ENCODE measurements at regions of chr20 and their contacts with region 1.

Region 1: DNA sequence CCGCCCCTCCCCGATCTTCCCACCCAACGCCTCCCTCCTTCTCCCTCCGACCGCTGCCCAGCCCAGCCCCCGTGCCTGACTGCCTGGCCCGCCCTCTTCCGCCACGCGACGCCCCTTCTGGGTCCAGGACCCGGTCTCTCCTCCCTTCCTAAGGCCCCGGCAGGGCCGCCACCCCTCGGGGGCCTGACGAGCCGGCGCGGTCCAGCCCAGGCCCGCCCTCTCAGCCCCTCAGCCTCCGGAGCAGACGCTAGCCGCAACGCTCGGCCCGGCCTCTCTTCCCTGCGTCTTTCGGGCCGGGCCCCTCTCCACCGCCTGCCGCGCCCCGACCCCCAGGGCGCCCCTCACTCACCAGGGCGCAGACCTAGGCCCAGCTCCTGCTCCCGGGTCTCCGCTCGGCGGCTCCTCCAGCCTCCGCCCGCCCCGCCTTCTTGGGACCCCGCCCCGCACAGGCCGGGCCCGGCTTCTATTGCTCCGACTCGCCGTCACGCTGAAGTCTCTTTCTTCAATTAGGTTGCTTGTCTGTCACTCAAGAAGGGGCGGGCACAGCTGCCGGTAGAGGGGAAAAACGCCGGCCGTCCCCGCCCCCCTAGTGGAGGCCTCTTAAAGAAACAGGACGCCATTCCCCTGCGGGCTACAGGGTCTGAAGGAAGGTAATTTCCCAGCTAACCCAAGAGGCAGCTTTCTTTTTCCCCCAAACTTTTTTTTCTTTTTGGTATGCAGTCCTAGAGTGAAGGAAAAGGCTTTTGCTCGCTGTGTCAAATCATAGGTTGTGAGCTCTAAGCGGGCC is at the start of gene ELMO2:
- DNase-seq: peak; percentile 95
- H3K4me3 ChIP-seq: peak within 1 kb of the TSS; percentile 85 to 96
- H3K27ac ChIP-seq: peak within 1 kb of the TSS; percentile 88 to 93
- H3K4me1 ChIP-seq: peaks cover 4 to 17% of the 10 kb centered on the region in 2 experiments; a peak in 2 of 4 replicates
- H3K27me3 ChIP-seq: no peaks in the 10 kb centered on the region
- CTCF ChIP-seq: no peak
- EP300 ChIP-seq: no peak
- RAD21 ChIP-seq: no peak
- polyA plus RNA-seq, gene ELMO2: 32.1 and 38.5 TPM in 2 replicates

Region 2: GRCh38 chr20:45946149-45946970 is 460.0 kb before region 1 on chr20:
- CTCF ChIA-PET with region 1: no interaction called
- POLR2A ChIA-PET with region 1: no interaction called
- DNase-seq: no peak
- H3K4me3 ChIP-seq: no peak overlapping the region
- H3K27ac ChIP-seq: no peak overlapping the region
- H3K4me1 ChIP-seq: peaks cover 0 to 5% of the 10 kb centered on the region in 2 experiments; a peak in 1 of 4 replicates
- H3K27me3 ChIP-seq: no peaks in the 10 kb centered on the region
- CTCF ChIP-seq: no peak
- EP300 ChIP-seq: no peak
- RAD21 ChIP-seq: no peak

Region 3: DNA sequence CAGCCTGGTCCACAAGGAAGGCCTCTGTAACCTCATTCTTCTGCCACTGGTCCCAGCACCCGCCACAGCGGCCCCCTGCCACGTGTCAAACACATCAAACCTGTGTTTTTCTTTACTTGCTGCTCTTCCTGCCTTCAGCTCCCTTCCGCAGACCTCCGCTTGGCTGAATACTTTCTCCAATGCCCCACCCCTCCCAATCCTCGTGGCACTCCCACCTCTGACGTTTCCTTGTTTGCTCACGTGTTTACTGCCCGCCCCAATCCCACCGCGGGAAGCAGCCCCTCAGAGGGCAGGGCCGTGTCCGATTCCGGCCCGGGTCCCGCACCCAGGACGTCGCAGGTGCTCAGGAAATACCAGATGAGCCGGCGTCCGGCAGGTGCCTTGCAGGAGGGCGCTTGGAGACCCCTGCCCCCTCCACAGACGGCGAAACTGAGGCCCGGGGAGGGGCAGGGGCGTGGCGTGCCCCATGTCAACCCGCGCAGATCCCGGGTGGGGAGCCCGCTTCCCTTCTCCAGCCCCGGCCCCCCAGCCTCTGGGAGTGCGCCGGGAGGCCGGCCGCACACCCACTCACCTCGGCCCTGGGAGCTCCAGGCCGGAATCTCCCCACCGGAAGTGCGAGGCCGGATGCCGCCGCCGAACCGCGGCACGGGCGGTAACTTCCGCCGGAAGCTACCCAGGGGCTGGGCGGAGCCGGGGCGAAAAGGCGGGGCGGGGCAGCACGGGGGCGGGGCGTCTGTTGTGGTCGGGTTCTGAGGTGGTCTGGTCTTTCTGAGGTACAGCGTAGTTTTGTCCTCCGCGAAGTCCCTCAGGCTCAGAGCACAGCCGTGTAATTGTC is 42.4 kb before region 1 on chr20:
- CTCF ChIA-PET with region 1: interaction called, 11 read pairs
- POLR2A ChIA-PET with region 1: interaction called, 10 read pairs
- DNase-seq: peak; percentile 97
- H3K4me3 ChIP-seq: peak overlapping the region; percentile 77 to 84
- H3K27ac ChIP-seq: peak overlapping the region; percentile 92 to 96
- H3K4me1 ChIP-seq: peaks cover 0 to 33% of the 10 kb centered on the region in 2 experiments; a peak in 2 of 4 replicates
- H3K27me3 ChIP-seq: no peaks in the 10 kb centered on the region
- CTCF ChIP-seq: no peak
- EP300 ChIP-seq: no peak
- RAD21 ChIP-seq: no peak

Measured in SK-N-SH (cell line).